Tibial artery (tissue), 4 donors: ENCODE measurements at regions of chr1 and their contacts with region 1.

Region 1: DNA sequence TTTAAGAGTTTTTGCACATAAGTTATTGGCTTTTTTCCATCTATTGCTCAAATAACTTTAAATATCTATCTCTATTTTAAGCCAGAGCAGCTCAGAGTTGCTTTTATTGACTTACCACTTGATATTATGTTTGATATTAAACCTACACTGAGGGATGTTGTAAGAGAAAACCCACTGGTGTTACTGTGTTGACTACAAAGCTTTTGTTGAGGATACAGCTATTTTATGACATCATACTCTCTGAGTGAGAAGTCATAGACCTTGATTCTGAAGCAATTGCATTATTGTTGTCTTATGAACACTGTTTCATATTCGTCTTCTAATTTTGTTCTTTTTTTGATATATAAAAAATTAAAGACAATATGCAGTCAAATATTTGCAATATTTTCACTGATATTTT is 560.4 kb downstream of the PTBP2 start:
- DNase-seq: no peak
- H3K4me3 ChIP-seq: no peak overlapping the region
- H3K27ac ChIP-seq: no peak overlapping the region
- H3K4me1 ChIP-seq: no peaks in the 10 kb centered on the region
- H3K27me3 ChIP-seq: no peaks in the 10 kb centered on the region
- CTCF ChIP-seq: no peak

Region 2: DNA sequence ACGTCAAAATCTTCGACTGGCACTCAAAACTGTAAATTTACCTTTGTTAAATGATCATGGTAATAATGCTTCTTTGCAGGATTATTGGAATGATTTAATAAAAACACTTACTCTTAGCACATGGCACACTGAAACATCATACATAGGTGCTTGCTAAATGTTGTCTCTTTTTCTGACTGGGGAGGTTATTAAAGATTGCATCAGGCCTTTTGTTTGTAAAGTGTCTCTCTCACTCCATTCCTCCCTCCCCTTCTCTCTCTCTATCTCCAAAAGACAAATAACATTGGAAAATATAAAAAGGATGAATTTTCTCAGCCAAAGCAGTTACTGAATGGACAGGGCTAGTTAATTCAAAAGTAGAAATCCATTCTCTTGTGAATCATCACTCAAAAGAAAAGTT is 234.6 kb after region 1 on chr1:
- intact Hi-C with region 1: loop called (anchors 10 kb)
- DNase-seq: no peak
- H3K4me3 ChIP-seq: no peak overlapping the region
- H3K27ac ChIP-seq: no peak overlapping the region
- H3K4me1 ChIP-seq: no peaks in the 10 kb centered on the region
- H3K27me3 ChIP-seq: no peaks in the 10 kb centered on the region
- CTCF ChIP-seq: no peak